ENCODE measurements at regions of chr12 and their contacts with region 1.

Region 1: GRCh38 chr12:108950991-108951739 is 69.7 kb downstream of the SVOP start:
- DNase-seq: peak; percentile 63 to 76
- ATAC-seq: peak; percentile 67 to 82 (median 73)
- H3K4me3 ChIP-seq: peak overlapping the region; percentile 33
- H3K27ac ChIP-seq: no peak overlapping the region
- H3K4me1 ChIP-seq: peaks cover 7% of the 10 kb centered on the region
- H3K27me3 ChIP-seq: no peaks in the 10 kb centered on the region
- CTCF ChIP-seq: peak; percentile 94

Region 2: GRCh38 chr12:108664338-108665258 is 286.6 kb before region 1 on chr12:
- intact Hi-C with region 1: loop called (anchors 5 to 10 kb)
- DNase-seq: peak; percentile 75 to 85
- ATAC-seq: peak; percentile 91 to 95 (median 92)
- H3K4me3 ChIP-seq: no peak overlapping the region
- H3K27ac ChIP-seq: peak overlapping the region; percentile 86
- H3K4me1 ChIP-seq: peaks cover 58% of the 10 kb centered on the region
- H3K27me3 ChIP-seq: no peaks in the 10 kb centered on the region
- CTCF ChIP-seq: peak; percentile 94

Region 3: GRCh38 chr12:108768591-108769500 is 182.3 kb before region 1 on chr12:
- intact Hi-C with region 1: no loop called
- DNase-seq: peak in 1 of 2 donors; percentile 35
- ATAC-seq: no peak
- H3K4me3 ChIP-seq: peak overlapping the region; percentile 37
- H3K27ac ChIP-seq: no peak overlapping the region
- H3K4me1 ChIP-seq: peaks cover 24% of the 10 kb centered on the region
- H3K27me3 ChIP-seq: no peaks in the 10 kb centered on the region
- CTCF ChIP-seq: no peak

Region 4: DNA sequence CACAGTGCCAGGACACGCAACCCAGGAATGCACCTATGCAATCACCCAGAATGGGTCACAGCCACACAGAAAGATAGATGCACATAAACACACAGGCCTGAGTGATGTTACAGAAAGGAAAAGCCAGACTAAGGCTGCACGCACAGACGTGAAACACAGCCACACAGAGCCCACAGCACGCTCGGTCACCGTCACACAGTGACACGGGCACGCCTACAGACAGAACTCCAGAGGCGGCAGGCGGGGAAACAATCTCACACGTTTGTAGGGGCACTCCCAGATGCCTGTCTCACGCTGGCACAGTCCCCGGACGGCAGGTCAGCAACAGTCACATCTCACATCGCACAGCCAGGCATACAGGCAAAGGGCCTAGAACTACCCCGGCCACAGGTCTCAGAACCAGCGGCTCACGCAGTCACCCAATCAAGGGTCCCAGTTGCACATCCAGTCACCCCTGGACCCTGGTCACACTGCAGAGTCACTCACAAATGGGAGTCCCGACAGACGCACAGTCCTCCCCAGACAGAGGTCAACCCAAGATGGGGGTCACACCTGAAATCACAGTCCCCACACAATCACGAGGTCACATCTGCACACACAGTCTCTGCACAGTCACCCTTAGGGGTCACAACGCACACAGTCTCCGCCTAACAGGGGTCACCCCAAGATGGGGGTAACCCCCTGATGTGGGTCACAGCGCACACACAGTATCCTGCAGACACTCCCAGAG is 94.6 kb before region 1 on chr12:
- intact Hi-C with region 1: loop called (anchors 2 to 5 kb)
- DNase-seq: peak; percentile 77 to 90
- ATAC-seq: peak; percentile 44 to 62 (median 59)
- H3K4me3 ChIP-seq: peak overlapping the region; percentile 98
- H3K27ac ChIP-seq: peak overlapping the region; percentile 100
- H3K4me1 ChIP-seq: peaks cover 56% of the 10 kb centered on the region
- H3K27me3 ChIP-seq: no peaks in the 10 kb centered on the region
- CTCF ChIP-seq: no peak

Region 5: DNA sequence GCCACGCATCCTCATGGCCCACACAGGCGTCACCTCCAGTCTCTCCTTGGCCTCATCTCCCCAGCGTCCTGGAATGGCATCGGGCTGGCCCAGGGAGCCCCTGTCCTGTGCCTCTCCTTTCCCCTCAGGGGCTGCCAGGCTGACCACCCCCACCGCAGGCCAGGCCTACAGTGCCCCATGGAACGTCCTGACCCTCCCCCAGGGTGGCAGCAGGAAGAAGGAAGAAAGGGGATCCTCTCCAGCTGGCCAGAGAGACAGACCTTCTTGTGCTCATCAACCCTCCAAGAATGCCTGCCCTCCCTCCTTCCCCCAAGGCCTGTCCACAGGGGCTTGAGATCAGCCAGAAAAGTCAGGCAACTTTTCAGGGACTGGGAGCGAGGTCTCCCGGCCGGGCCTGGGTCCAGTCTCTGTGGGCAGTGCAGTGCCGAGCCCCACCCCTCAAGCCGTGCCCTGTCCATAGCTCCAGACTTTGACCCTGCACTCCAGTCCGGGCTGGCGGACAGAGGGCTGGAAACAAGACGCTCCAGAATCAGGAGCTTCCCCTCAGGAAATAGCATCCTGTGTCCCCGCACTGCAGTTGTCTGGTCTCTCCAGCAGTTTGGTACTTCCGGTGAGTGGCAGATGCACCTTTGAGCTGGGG is 71.4 kb before region 1 on chr12 and contains the start of gene DAO:
- intact Hi-C with region 1: loop called in 1 of 2 experiments (anchors 5 kb)
- DNase-seq: no peak
- ATAC-seq: no peak
- H3K4me3 ChIP-seq: no peak within 1 kb of the TSS
- H3K27ac ChIP-seq: no peak within 1 kb of the TSS
- H3K4me1 ChIP-seq: no peaks in the 10 kb centered on the region
- H3K27me3 ChIP-seq: no peaks in the 10 kb centered on the region
- CTCF ChIP-seq: no peak
- total RNA-seq, gene DAO: not detected

Region 6: GRCh38 chr12:109165599-109165998 is 214.4 kb after region 1 on chr12:
- intact Hi-C with region 1: no loop called
- DNase-seq: no peak
- ATAC-seq: peak in 1 of 4 donors; percentile 18
- H3K4me3 ChIP-seq: no peak overlapping the region
- H3K27ac ChIP-seq: peak overlapping the region; percentile 21
- H3K4me1 ChIP-seq: peaks cover 15% of the 10 kb centered on the region
- H3K27me3 ChIP-seq: no peaks in the 10 kb centered on the region
- CTCF ChIP-seq: no peak

Region 7: GRCh38 chr12:109449845-109450532 is 498.8 kb after region 1 on chr12:
- intact Hi-C with region 1: no loop called
- DNase-seq: no peak
- ATAC-seq: no peak
- H3K4me3 ChIP-seq: no peak overlapping the region
- H3K27ac ChIP-seq: no peak overlapping the region
- H3K4me1 ChIP-seq: no peaks in the 10 kb centered on the region
- H3K27me3 ChIP-seq: no peaks in the 10 kb centered on the region
- CTCF ChIP-seq: no peak

Measured in psoas muscle (tissue), 8 donors.